CD14-positive monocyte (primary cell): ENCODE measurements at regions of chr12 and their contacts with region 1.

Region 1: DNA sequence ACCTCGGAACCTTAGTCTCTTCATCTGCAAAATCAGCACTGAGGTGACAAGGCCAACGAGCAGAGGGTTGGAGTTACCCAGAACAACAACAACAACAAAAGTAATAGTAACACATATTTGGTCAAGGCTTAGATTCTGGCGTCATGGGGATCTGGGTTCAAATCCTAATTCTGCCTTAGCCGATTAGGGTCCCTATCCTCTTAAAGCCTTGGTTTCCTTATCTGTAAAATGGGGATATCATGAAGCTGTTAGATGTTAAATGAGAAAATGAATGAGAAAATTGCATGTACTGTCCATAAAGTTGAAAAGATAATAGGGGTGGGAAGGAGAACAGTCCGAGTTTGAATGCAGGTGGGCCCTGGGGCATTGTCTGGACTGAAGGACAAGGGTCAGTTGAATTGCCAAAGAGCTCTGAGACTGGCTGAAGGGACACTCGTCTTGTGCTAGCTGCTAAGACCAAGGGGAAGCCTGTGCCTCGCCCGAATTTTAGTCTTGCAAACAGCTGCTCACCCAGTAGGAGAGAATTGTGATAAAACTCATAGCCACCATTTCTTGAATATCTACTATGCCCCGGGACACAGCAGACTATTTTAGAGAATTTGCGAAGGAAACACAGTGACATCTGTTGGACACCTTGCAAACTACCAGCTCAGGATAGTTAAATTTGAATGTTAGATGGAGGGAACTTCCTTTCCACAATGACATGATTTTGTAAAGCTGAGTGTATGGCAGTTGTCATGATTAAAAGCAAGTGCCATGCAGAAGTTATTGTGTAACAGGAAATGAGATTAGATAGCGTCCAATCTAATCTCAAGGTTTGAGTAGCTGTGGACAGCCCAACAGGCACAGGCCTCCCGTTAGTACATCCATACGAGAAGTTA is 6.8 kb upstream of the HNF1A start:
- DNase-seq: peak; percentile 44 to 65 (median 62)
- H3K4me3 ChIP-seq: no peak overlapping the region
- H3K4me3 Mint-ChIP-seq: peak overlapping the region in 1 of 2 donors; percentile 35
- H3K27ac ChIP-seq: no peak overlapping the region
- H3K27ac Mint-ChIP-seq: peak overlapping the region in 2 of 7 donors; percentile 1 to 61
- H3K4me1 ChIP-seq: peaks cover 10 to 14% of the 10 kb centered on the region in 2 donors
- H3K4me1 Mint-ChIP-seq: peaks cover 14% of the 10 kb centered on the region
- H3K27me3 ChIP-seq: no peaks in the 10 kb centered on the region
- H3K27me3 Mint-ChIP-seq: peaks cover 0 to 3% (median 0%) of the 10 kb centered on the region in 3 donors
- CTCF ChIP-seq: peak; percentile 79

Region 2: DNA sequence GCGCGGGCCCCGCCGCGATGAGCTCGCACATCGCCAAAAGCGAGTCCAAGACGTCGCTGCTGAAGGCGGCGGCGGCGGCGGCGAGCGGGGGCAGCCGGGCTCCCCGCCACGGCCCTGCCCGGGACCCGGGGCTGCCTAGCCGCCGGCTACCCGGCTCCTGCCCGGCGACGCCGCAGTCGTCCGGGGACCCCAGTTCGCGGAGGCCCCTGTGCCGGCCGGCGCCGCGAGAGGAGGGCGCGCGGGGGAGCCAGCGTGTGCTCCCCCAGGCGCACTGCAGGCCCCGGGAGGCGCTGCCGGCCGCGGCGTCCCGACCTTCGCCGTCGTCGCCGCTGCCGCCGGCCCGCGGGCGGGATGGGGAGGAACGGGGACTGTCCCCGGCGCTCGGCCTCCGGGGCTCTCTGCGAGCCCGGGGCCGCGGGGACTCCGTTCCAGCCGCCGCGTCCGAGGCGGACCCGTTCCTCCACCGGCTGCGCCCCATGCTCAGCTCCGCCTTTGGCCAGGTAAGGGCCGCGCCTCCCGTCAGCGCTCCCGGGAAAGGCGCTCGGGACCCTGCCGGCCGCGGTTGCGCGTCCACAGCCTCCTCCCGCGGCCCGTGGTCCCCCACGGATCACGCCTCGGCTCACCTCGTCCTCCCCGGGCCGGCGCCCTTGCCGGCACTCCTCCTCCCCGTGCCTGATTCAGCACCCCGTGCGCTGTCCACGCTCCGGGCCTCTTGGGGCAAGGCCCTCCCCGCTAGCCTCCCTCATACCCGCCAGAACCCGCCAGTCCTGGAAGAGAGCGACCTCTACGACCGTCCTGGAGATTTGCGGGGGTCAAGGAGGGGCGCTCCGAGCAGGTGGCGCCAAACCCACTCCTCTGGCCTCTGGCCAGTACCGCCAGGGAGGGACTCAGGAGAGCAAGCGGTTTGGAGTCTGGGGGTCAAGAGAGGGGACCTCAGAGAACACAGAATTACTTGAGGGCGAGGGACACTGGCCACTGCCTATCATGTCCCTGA is 330.4 kb before region 1 on chr12:
- intact Hi-C with region 1: loop called (anchors 5 to 10 kb)
- DNase-seq: peak in 2 of 3 donors; percentile 15 to 34
- H3K4me3 ChIP-seq: peak overlapping the region in 1 of 3 experiments; percentile 64
- H3K4me3 Mint-ChIP-seq: peak overlapping the region; percentile 58 to 90
- H3K27ac ChIP-seq: no peak overlapping the region
- H3K27ac Mint-ChIP-seq: no peak overlapping the region
- H3K4me1 ChIP-seq: peaks cover 10 to 19% of the 10 kb centered on the region in 2 donors
- H3K4me1 Mint-ChIP-seq: peaks cover 9% of the 10 kb centered on the region
- H3K27me3 ChIP-seq: peaks cover 42 to 65% of the 10 kb centered on the region in 2 donors
- H3K27me3 Mint-ChIP-seq: peaks cover 56 to 72% (median 68%) of the 10 kb centered on the region in 3 donors
- CTCF ChIP-seq: no peak